Activated T-helper 1 cell treated with anti-CD3 and anti-CD28 coated beads, Interleukin-12 subunit alpha, Interleukin-12 subunit beta, Interleukin-2, Interleukin-4 antibody, amounts not matched to agents 30 ng/mL and 10 ng/mL and 1 ng/mL, durations not matched to agents 14 hours and 24 hours and 36 hours (primary cell): ENCODE measurements at regions of chr5 and their contacts with region 1.

Region 1: GRCh38 chr5:119397518-119398380 is 41.9 kb downstream of the TNFAIP8 start:
- DNase-seq: no peak
- H3K4me3 Mint-ChIP-seq: peak overlapping the region; percentile 57
- H3K27ac Mint-ChIP-seq: peak overlapping the region; percentile 91
- H3K4me1 Mint-ChIP-seq: peaks cover 67% of the 10 kb centered on the region
- H3K27me3 Mint-ChIP-seq: no peaks in the 10 kb centered on the region

Region 2: GRCh38 chr5:119031905-119032304 is 365.8 kb before region 1 on chr5:
- intact Hi-C with region 1: loop called (anchors 1 kb)
- DNase-seq: no peak
- H3K4me3 Mint-ChIP-seq: peak overlapping the region; percentile 45
- H3K27ac Mint-ChIP-seq: peak overlapping the region; percentile 21
- H3K4me1 Mint-ChIP-seq: peaks cover 35% of the 10 kb centered on the region
- H3K27me3 Mint-ChIP-seq: peaks cover 2% of the 10 kb centered on the region

Region 3: GRCh38 chr5:119079318-119079921 is 318.3 kb before region 1 on chr5:
- intact Hi-C with region 1: loop called (anchors 1 kb)
- DNase-seq: peak; percentile 25
- H3K4me3 Mint-ChIP-seq: peak overlapping the region; percentile 23
- H3K27ac Mint-ChIP-seq: peak overlapping the region; percentile 70
- H3K4me1 Mint-ChIP-seq: peaks cover 50% of the 10 kb centered on the region
- H3K27me3 Mint-ChIP-seq: no peaks in the 10 kb centered on the region

Region 4: DNA sequence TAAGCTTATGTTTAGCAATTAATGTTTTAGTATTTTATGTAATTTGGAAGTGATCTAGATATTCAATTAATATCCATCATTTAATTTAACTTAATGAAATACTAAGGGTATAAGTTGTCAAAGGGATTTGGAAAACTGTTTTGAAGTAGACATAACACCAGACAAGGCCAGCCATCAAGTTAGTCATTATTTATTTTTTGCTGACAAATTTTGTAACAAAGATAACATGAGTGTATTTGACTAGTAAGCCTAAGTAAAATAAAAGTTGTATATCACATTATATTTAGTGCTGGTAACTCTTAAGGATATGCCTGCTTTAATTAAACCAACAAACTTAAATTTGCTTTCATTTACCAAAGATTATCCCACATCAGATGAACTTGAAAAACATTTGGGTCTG is 167.8 kb before region 1 on chr5:
- intact Hi-C with region 1: no loop called
- DNase-seq: no peak
- H3K4me3 Mint-ChIP-seq: no peak overlapping the region
- H3K27ac Mint-ChIP-seq: no peak overlapping the region
- H3K4me1 Mint-ChIP-seq: no peaks in the 10 kb centered on the region
- H3K27me3 Mint-ChIP-seq: no peaks in the 10 kb centered on the region

Region 5: GRCh38 chr5:119287547-119288073 is 110.1 kb before region 1 on chr5:
- intact Hi-C with region 1: loop called (anchors 1 kb)
- DNase-seq: no peak
- H3K4me3 Mint-ChIP-seq: peak overlapping the region; percentile 72
- H3K27ac Mint-ChIP-seq: peak overlapping the region; percentile 93
- H3K4me1 Mint-ChIP-seq: peaks cover 99% of the 10 kb centered on the region
- H3K27me3 Mint-ChIP-seq: no peaks in the 10 kb centered on the region

Region 6: GRCh38 chr5:119328753-119329602 is 68.8 kb before region 1 on chr5:
- intact Hi-C with region 1: loop called (anchors 1 kb)
- DNase-seq: peak; percentile 52
- H3K4me3 Mint-ChIP-seq: peak overlapping the region; percentile 52
- H3K27ac Mint-ChIP-seq: peak overlapping the region; percentile 95
- H3K4me1 Mint-ChIP-seq: peaks cover 91% of the 10 kb centered on the region
- H3K27me3 Mint-ChIP-seq: no peaks in the 10 kb centered on the region

Region 7: GRCh38 chr5:119367502-119368237 is 30.1 kb before region 1 on chr5:
- intact Hi-C with region 1: loop called (anchors 1 kb)
- DNase-seq: no peak
- H3K4me3 Mint-ChIP-seq: peak overlapping the region; percentile 84
- H3K27ac Mint-ChIP-seq: peak overlapping the region; percentile 95
- H3K4me1 Mint-ChIP-seq: peaks cover 85% of the 10 kb centered on the region
- H3K27me3 Mint-ChIP-seq: no peaks in the 10 kb centered on the region

Region 8: DNA sequence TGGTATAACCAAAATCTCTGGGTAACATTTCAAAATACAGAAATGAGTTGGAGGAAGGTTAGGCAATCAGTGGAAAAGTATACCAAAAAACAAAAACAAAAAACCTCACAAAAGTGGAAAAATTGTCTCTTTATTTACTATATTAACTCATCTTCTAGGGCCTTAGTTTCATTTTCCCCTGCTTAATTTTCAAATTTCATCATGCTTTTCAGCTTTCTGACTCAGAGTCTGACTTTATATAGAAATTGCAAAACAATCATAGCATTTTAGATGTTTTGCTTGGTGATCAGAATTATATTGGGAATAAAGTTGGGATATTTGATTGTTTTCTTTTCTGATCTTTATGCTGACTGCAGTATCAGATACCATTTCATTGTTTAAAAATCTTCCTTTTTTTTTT is 809.4 kb after region 1 on chr5:
- intact Hi-C with region 1: no loop called
- DNase-seq: no peak
- H3K4me3 Mint-ChIP-seq: no peak overlapping the region
- H3K27ac Mint-ChIP-seq: no peak overlapping the region
- H3K4me1 Mint-ChIP-seq: no peaks in the 10 kb centered on the region
- H3K27me3 Mint-ChIP-seq: no peaks in the 10 kb centered on the region